Ascending aorta (tissue), 2 donors: ENCODE measurements at regions of chr5 and their contacts with region 1.

Region 1: GRCh38 chr5:79133657-79134451 is 22.2 kb downstream of the BHMT start:
- DNase-seq: peak in 1 of 2 donors; percentile 84
- H3K4me3 ChIP-seq: peak overlapping the region; percentile 36 to 60
- H3K27ac ChIP-seq: peak overlapping the region; percentile 81 to 85
- H3K4me1 ChIP-seq: no peaks in the 10 kb centered on the region
- H3K27me3 ChIP-seq: no peaks in the 10 kb centered on the region
- CTCF ChIP-seq: peak; percentile 41 to 78 (median 72)

Region 2: GRCh38 chr5:78467752-78468357 is 666.0 kb before region 1 on chr5:
- intact Hi-C with region 1: loop called (anchors 5 kb)
- DNase-seq: no peak
- H3K4me3 ChIP-seq: no peak overlapping the region
- H3K27ac ChIP-seq: no peak overlapping the region
- H3K4me1 ChIP-seq: no peaks in the 10 kb centered on the region
- H3K27me3 ChIP-seq: no peaks in the 10 kb centered on the region
- CTCF ChIP-seq: peak; percentile 73 to 85 (median 84)

Region 3: GRCh38 chr5:79008362-79008761 is 125.5 kb before region 1 on chr5:
- intact Hi-C with region 1: no loop called
- DNase-seq: no peak
- H3K4me3 ChIP-seq: no peak overlapping the region
- H3K27ac ChIP-seq: no peak overlapping the region
- H3K4me1 ChIP-seq: no peaks in the 10 kb centered on the region
- H3K27me3 ChIP-seq: no peaks in the 10 kb centered on the region
- CTCF ChIP-seq: no peak

Region 4: DNA sequence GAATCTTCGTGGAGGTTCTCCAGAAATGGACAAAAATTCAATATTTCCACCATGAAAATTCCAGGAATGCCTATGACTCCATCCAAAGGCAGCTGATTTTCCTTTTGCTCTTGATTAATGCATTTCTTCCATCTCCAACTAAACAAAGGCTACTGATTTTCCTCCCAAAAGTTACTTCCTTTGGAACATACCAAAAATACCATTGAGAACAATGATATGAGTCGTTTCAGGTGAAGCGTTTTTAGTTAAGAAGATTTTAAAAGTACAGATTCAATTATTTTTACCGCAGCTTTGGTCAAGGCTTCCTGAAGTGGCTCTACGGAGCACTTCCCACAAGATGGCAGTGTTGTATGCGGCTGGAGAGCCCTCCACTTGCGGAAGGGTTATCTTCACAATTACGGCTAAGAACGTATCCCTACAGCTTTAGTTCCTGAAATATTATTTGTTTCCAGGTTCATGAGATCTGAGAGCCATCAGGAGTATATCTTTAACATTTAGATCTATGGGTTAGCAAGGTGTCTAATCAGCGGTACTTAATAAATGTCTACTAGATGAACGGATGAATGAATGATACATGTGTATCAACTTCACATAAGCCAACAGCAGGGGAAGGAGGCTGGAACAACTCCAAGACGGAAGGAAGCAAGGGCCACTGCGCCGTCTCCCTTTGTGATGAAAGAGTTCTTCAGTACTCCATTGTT is 112.8 kb before region 1 on chr5:
- intact Hi-C with region 1: loop called (anchors 1 kb)
- DNase-seq: peak in 1 of 2 donors; percentile 75
- H3K4me3 ChIP-seq: peak overlapping the region in 1 of 2 donors; percentile 22
- H3K27ac ChIP-seq: peak overlapping the region in 1 of 2 donors; percentile 14
- H3K4me1 ChIP-seq: peaks cover 0 to 11% of the 10 kb centered on the region in 2 donors
- H3K27me3 ChIP-seq: no peaks in the 10 kb centered on the region
- CTCF ChIP-seq: peak; percentile 37 to 77 (median 77)

Region 5: DNA sequence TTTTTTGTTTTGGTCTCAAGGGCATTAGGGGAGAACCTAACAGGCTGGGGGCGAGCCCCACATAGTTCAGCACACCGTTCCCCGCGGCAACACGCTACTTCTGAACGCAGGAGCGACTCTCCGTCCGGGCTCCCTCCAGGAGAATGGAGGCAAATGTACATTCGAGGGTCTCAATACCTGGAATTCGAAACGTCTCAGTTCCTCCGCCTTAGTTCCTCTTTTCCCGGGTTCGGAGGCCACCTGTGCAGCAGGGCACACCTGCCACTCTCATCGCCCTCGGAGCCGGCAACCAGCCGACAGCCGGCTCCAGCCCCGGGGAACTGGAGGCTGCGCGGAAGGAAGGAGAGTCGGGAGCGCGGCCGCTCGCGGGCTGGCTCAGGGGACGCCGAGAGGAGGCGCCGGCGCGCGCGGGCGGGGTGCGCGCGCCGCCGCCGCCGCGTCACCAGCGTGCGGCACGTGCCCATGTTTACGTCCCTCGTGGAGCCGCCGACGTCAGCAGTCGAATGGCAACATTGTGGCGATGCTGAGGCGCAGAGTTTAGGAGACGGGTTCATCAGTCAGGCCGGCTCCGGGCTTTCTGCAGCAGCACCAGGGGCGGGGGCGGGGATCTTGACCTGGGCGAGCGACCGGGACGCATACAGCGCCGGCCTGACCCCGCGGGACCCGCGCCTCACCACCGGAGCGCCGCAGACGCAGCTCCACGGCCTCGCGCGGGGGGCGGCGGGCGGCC is 101.9 kb after region 1 on chr5 and contains the start of gene JMY:
- intact Hi-C with region 1: loop called (anchors 2 kb)
- DNase-seq: peak; percentile 74 to 90
- H3K4me3 ChIP-seq: peak within 1 kb of the TSS; percentile 70 to 91
- H3K27ac ChIP-seq: peak within 1 kb of the TSS; percentile 72 to 94
- H3K4me1 ChIP-seq: peaks cover 5 to 10% of the 10 kb centered on the region in 2 donors
- H3K27me3 ChIP-seq: no peaks in the 10 kb centered on the region
- CTCF ChIP-seq: peak in 2 of 3 experiments; percentile 8 to 17
- total RNA-seq, gene JMY: 5.2 TPM

Region 6: GRCh38 chr5:79464695-79465332 is 331.0 kb after region 1 on chr5:
- intact Hi-C with region 1: loop called (anchors 10 kb)
- DNase-seq: no peak
- H3K4me3 ChIP-seq: no peak overlapping the region
- H3K27ac ChIP-seq: no peak overlapping the region
- H3K4me1 ChIP-seq: no peaks in the 10 kb centered on the region
- H3K27me3 ChIP-seq: no peaks in the 10 kb centered on the region
- CTCF ChIP-seq: peak in 2 of 3 experiments; percentile 28 to 59

Region 7: DNA sequence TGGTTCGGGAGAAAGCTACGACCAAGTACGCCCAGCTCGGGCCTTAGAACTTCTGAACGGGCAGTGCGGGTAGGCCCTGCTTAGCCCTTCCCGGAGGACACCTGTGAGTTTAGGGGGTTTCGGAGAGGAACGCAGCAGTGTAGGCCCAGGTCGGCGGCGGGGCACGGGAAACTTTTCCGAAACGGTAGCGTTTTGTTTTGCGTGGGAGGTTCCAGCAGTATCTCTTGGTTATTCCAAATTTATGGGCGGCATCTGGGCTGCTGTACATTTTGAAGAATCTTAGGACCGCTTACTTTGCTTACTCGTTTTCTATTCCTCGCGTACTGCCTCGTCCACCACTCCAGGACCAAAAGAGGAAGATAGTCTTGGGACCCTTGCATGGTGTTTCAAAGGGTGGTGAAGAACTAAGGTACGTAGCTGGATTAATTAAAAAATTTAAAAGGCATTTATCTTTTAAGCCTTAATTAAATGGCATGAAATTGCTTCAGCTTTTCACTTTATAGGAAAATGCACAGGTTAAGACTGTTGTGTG is 478.9 kb after region 1 on chr5:
- intact Hi-C with region 1: loop called (anchors 5 kb)
- DNase-seq: no peak
- H3K4me3 ChIP-seq: peak overlapping the region; percentile 87 to 99
- H3K27ac ChIP-seq: peak overlapping the region; percentile 95 to 96
- H3K4me1 ChIP-seq: peaks cover 0 to 9% of the 10 kb centered on the region in 2 donors
- H3K27me3 ChIP-seq: no peaks in the 10 kb centered on the region
- CTCF ChIP-seq: no peak